PC-3 (cell line): ENCODE measurements at regions of chr14 and their contacts with region 1.

Region 1: GRCh38 chr14:43464962-43465361 is 1042.1 kb downstream of the FSCB start:
- DNase-seq: peak; percentile 72
- ATAC-seq: peak; percentile 93
- H3K4me3 ChIP-seq: no peak overlapping the region
- H3K27ac ChIP-seq: no peak overlapping the region
- H3K4me1 ChIP-seq: peaks cover 13% of the 10 kb centered on the region
- H3K27me3 ChIP-seq: no peaks in the 10 kb centered on the region
- CTCF ChIP-seq: no peak

Region 2: DNA sequence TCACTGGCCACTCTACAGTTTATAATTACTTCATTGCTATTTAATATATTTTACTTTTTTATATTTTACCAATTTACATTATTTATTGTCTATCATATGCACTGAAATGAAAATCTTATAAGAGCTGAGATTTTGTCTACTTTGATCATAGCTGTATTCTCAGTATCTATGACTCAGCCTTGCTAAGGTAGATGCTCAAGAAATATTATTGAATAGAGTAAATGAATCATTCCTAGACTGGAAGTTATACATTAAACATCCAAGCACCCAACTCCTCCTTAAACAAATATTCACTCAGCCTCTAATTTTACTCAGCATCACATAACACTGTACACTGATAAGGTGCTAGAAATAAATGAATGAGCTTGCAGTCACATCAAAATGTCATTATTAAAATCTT is 433.4 kb before region 1 on chr14:
- CTCF ChIA-PET with region 1: no interaction called
- POLR2A ChIA-PET with region 1: no interaction called
- intact Hi-C with region 1: loop called (anchors 10 kb)
- DNase-seq: peak; percentile 50
- ATAC-seq: peak; percentile 90
- H3K4me3 ChIP-seq: no peak overlapping the region
- H3K27ac ChIP-seq: no peak overlapping the region
- H3K4me1 ChIP-seq: 0 out of 2 replicates have a peak, but pooled peaks cover 3% of the 10 kb centered on the region
- H3K27me3 ChIP-seq: no peaks in the 10 kb centered on the region
- CTCF ChIP-seq: no peak

Region 3: DNA sequence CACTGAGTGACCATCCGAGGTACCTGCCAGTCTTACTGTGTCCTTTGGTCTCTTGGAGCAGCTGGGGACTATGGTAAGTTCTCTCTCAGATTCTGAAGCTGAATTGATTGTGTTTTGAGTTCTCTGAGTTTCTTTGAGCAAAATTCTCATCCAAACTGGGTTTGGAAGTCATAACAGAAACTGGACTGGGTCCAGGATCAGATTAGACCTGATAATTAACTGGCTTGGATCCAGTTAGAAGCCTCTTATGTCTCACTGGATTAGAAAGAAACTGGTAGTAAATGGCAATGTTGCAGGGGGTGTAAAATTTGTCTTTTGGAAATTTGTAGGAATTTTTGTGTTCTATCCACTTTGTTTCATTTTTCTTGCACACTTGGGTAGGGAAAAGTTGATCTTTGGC is 152.2 kb before region 1 on chr14:
- CTCF ChIA-PET with region 1: no interaction called
- POLR2A ChIA-PET with region 1: no interaction called
- intact Hi-C with region 1: loop called (anchors 2 kb)
- DNase-seq: no peak
- ATAC-seq: no peak
- H3K4me3 ChIP-seq: no peak overlapping the region
- H3K27ac ChIP-seq: no peak overlapping the region; the same call in 1 of the 2 replicates
- H3K4me1 ChIP-seq: peaks cover 21% of the 10 kb centered on the region
- H3K27me3 ChIP-seq: no peaks in the 10 kb centered on the region
- CTCF ChIP-seq: no peak

Region 4: GRCh38 chr14:43411841-43412240 is 53.1 kb before region 1 on chr14:
- CTCF ChIA-PET with region 1: no interaction called
- POLR2A ChIA-PET with region 1: no interaction called
- intact Hi-C with region 1: no loop called
- DNase-seq: no peak
- ATAC-seq: no peak
- H3K4me3 ChIP-seq: no peak overlapping the region
- H3K27ac ChIP-seq: no peak overlapping the region
- H3K4me1 ChIP-seq: peaks cover 21% of the 10 kb centered on the region
- H3K27me3 ChIP-seq: no peaks in the 10 kb centered on the region
- CTCF ChIP-seq: no peak

Region 5: GRCh38 chr14:45227566-45227965 is 1762.6 kb after region 1 on chr14:
- CTCF ChIA-PET with region 1: no interaction called
- POLR2A ChIA-PET with region 1: interaction called, 15 read pairs
- intact Hi-C with region 1: no loop called
- DNase-seq: no peak
- ATAC-seq: peak; percentile 54; the same call in 1 of the 2 replicates
- H3K4me3 ChIP-seq: no peak overlapping the region
- H3K27ac ChIP-seq: no peak overlapping the region
- H3K4me1 ChIP-seq: no peaks in the 10 kb centered on the region
- H3K27me3 ChIP-seq: no peaks in the 10 kb centered on the region
- CTCF ChIP-seq: no peak